Sigmoid colon (tissue), 7 donors: ENCODE measurements at regions of chr17 and their contacts with region 1.

Region 1: GRCh38 chr17:30716461-30717300 is 107.8 kb downstream of the CRLF3 start:
- DNase-seq: peak; percentile 49
- H3K4me3 ChIP-seq: no peak overlapping the region
- H3K27ac ChIP-seq: no peak overlapping the region
- H3K4me1 ChIP-seq: peaks cover 0 to 14% (median 8%) of the 10 kb centered on the region in 4 donors
- H3K27me3 ChIP-seq: no peaks in the 10 kb centered on the region
- CTCF ChIP-seq: no peak
- EP300 ChIP-seq: no peak
- POLR2A ChIP-seq: no peak

Region 2: DNA sequence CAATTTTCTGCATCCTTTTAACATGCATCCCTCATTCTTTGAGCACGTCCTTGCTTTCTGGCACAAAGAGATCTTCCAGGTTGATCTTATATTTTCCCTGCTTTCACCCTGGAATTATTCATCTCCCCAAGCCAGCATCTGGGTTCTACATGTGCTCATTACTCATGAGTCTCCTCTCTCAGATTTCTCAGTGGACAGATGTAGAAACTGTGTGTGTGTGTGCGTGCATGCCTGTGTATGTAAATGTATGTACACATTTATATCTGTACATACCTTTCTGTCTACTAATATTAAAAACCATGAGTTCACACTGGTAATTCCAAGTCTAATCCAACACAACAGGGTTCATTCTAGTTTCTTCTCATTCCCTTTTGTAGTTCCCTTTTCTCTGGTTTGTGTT is 642.0 kb before region 1 on chr17:
- intact Hi-C with region 1: no loop called
- DNase-seq: no peak
- H3K4me3 ChIP-seq: no peak overlapping the region
- H3K27ac ChIP-seq: no peak overlapping the region
- H3K4me1 ChIP-seq: no peaks in the 10 kb centered on the region
- H3K27me3 ChIP-seq: no peaks in the 10 kb centered on the region
- CTCF ChIP-seq: no peak
- EP300 ChIP-seq: no peak
- POLR2A ChIP-seq: no peak

Region 3: DNA sequence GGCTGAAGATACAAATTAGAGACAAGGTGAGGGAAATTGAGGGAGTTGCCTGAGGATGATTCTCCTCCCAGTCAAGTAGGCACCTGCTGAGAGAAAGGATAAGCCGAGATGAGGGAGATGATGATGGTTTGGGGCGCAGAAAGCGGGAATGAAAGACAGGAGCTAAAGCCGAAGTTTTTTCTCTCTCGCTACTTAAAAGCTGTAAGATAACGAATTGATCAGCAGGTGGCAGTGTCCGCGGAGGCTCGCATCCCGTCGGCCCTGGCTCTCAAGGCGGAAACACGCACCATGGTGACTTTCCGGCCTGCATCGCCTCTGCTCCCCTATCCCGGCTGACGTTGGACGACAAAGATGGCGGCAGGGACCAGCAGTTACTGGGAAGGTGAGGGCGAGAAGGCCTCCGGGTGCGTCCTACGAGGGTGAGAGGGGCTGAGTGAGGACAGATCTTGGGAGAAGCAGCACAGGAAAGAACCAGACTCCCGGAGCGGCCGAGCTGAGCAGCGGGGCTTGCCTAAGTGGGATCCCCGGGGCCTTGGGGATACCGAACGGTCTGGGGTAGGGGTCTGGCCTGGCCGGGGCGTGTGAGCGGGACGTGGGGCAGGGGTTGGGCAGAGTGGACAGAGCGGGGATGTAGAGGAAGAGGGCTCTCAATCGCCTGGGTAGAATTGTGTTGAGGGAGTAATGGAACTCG is 239.5 kb before region 1 on chr17 and contains the start of gene GOSR1:
- intact Hi-C with region 1: loop called (anchors 10 kb)
- DNase-seq: peak; percentile 97
- H3K4me3 ChIP-seq: peak within 1 kb of the TSS; percentile 74 to 100 (median 84)
- H3K27ac ChIP-seq: peak within 1 kb of the TSS; percentile 90 to 94 (median 94)
- H3K4me1 ChIP-seq: peaks cover 0 to 22% (median 16%) of the 10 kb centered on the region in 4 donors
- H3K27me3 ChIP-seq: no peaks in the 10 kb centered on the region
- CTCF ChIP-seq: peak; percentile 60 to 79 (median 61)
- EP300 ChIP-seq: no peak
- POLR2A ChIP-seq: no peak
- total RNA-seq, gene GOSR1: 28.2 to 51.3 (median 46.3) TPM

Region 4: GRCh38 chr17:30600049-30600829 is 116.4 kb before region 1 on chr17:
- intact Hi-C with region 1: loop called (anchors 5 kb)
- DNase-seq: peak; percentile 88
- H3K4me3 ChIP-seq: peak overlapping the region; percentile 71 to 99 (median 86)
- H3K27ac ChIP-seq: peak overlapping the region; percentile 94 to 99 (median 98)
- H3K4me1 ChIP-seq: peaks cover 0 to 27% (median 10%) of the 10 kb centered on the region in 4 donors
- H3K27me3 ChIP-seq: no peaks in the 10 kb centered on the region
- CTCF ChIP-seq: peak; percentile 43 to 62 (median 50)
- EP300 ChIP-seq: no peak
- POLR2A ChIP-seq: peak; percentile 78 to 86

Region 5: GRCh38 chr17:30824356-30825145 is 107.9 kb after region 1 on chr17 and contains the start of gene CRLF3:
- intact Hi-C with region 1: loop called (anchors 10 kb)
- DNase-seq: peak; percentile 93
- H3K4me3 ChIP-seq: peak within 1 kb of the TSS; percentile 76 to 99 (median 96)
- H3K27ac ChIP-seq: peak within 1 kb of the TSS; percentile 77 to 90 (median 87)
- H3K4me1 ChIP-seq: peaks cover 0 to 32% (median 15%) of the 10 kb centered on the region in 4 donors
- H3K27me3 ChIP-seq: no peaks in the 10 kb centered on the region
- CTCF ChIP-seq: peak; percentile 9 to 53 (median 35)
- EP300 ChIP-seq: no peak
- POLR2A ChIP-seq: peak; percentile 23 to 58
- total RNA-seq, gene CRLF3: 7.2 to 11.4 (median 9.8) TPM